Right ventricle myocardium inferior (tissue), 1 donor: ENCODE measurements at regions of chr9 and their contacts with region 1.

Region 1: DNA sequence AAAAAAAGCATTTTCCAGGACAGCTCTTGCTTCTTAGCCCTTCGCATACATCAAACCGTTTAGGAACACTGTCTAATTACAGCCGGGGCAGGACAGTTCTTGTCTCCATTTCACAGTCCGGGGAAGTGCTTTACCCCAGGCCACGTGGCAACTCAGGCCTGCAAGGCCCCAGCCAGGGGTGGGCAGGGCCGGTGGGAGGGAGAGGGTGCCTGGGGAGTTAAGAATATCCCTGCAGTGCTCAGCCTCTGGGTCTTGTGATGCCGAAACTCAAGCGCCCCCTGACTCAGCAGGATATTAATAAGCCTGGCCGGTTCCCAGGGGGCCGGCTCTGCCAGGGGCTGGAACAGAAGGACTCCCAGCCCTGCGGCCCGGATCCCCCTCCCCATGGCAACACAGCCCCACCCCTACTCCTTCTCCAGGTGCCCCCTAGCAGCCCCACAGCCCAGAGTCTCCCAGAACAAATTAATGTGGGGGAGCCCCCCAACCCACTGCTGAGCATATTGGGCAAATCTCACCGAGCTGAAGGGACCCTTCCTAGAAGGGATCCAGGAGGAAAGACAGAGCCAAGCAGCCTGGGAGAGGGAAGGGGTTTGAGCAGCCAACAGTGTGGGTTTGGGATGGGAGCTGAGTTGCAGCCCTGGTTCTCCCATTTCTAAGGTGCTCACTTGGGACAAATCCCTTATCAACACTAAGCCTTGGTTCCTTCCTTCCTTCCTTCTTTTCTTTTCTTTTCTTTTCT is 45.3 kb downstream of the PLPP7 start:
- DNase-seq: peak; percentile 86
- ATAC-seq: peak; percentile 92

Region 2: DNA sequence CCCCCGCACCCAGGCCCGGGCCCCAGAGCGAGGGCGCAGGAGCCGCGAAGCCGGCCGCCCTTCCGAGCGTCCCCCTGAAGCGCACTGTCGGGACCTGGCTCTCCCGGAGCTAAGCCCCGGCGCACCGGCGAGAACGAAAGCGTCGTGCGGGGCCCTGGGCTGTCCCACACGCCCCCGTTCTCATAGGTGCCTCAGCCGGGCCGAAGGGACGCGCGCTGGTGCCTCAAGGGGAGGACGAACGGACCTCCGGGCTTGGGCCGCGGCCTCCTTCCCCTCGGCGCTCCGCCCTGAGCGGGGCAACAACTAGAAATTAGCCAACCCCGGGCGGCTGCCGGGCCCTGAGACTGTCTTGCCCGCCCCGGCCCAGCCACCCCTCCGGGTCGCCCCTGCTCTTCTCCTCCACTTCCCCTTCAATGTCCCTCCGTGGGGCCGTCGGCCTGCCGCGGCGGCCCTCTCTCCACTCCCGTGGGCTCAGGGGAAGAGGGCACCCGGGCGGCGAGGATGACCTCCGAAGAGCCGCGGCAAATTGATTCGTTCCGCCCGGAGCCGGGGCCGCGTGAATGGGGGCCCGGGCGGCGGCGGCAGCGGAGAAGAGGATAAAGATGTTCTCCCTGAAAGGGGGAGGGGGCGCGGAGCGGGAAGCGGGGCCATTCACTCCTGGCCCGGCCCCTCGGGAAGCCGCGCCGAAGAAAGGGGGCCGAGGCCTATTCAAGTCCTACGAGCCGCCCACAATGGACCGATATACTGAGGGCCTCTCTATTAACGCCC is 673.9 kb before region 1 on chr9:
- intact Hi-C with region 1: no loop called
- DNase-seq: peak; percentile 57
- ATAC-seq: no peak

Region 3: DNA sequence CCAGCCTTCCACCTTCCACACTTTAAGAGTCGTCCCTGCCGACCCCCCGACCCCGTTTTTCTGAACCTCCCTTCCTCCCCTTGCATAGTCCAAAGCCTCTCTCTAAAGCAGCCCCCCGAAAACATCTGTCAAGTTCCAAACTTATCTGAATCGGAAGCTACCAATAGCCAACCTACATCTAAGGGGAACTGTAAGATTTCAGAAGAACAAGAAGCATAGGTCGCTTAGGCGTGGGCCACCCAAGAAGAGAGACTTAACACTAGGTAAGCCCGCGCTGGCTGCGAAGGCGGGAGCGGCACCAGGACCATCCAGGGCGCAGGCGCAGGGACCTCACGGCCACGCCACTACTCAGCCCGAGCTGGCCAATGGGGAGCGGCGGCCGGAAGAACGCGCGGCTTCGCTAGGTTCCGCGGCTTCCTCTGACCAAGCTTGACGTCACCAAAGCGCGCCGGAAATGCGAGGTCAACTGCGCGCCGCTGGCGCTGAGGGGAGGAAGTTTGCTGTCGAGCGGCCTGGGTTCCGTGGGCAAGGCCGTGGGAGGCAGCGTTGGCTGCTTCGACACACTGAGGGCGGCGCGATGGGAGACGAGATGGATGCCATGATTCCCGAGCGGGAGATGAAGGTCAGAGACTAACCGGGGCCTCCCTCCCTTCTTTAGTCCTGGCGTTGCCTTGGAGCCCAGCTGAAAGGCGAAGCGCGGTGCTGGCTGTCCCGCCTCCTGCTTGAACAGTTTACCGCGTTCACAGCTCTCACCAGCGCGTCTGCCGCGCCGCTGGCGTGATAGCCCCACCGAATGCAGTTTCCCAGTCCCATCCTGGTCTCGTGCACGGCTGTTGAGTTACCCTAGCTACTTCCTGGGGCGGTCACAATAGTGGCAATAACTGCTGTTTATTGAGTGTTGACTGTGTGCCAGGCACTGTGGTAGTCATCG is 209.4 kb before region 1 on chr9 and contains the start of gene NUP214:
- intact Hi-C with region 1: loop called (anchors 5 kb)
- DNase-seq: peak; percentile 100
- ATAC-seq: peak; percentile 100
- total RNA-seq, gene NUP214: 20.8 TPM

Region 4: GRCh38 chr9:131138676-131139075 is 196.1 kb before region 1 on chr9:
- intact Hi-C with region 1: no loop called
- DNase-seq: no peak
- ATAC-seq: no peak

Region 5: GRCh38 chr9:131237931-131238401 is 96.8 kb before region 1 on chr9:
- intact Hi-C with region 1: loop called (anchors 5 kb)
- DNase-seq: peak; percentile 91
- ATAC-seq: peak; percentile 53

Region 6: GRCh38 chr9:131289301-131290038 is 45.3 kb before region 1 on chr9 and contains the start of gene PLPP7:
- intact Hi-C with region 1: loop called (anchors 5 kb)
- DNase-seq: peak; percentile 92
- ATAC-seq: peak; percentile 93
- total RNA-seq, gene PLPP7: 107 TPM

Region 7: GRCh38 chr9:131402738-131403492 is 68.1 kb after region 1 on chr9:
- intact Hi-C with region 1: no loop called
- DNase-seq: peak; percentile 89
- ATAC-seq: peak; percentile 79